Right ventricle myocardium inferior (tissue), 1 donor: ENCODE measurements at regions of chr12 and their contacts with region 1.

Region 1: GRCh38 chr12:57983146-57983857 is 41.9 kb downstream of the ATP23 start:
- DNase-seq: no peak
- ATAC-seq: no peak

Region 2: GRCh38 chr12:58176296-58176869 is 193.1 kb after region 1 on chr12:
- intact Hi-C with region 1: loop called (anchors 10 kb)
- DNase-seq: no peak
- ATAC-seq: no peak

Region 3: GRCh38 chr12:58302485-58303011 is 319.2 kb after region 1 on chr12:
- intact Hi-C with region 1: loop called (anchors 10 kb)
- DNase-seq: no peak
- ATAC-seq: no peak

Region 4: DNA sequence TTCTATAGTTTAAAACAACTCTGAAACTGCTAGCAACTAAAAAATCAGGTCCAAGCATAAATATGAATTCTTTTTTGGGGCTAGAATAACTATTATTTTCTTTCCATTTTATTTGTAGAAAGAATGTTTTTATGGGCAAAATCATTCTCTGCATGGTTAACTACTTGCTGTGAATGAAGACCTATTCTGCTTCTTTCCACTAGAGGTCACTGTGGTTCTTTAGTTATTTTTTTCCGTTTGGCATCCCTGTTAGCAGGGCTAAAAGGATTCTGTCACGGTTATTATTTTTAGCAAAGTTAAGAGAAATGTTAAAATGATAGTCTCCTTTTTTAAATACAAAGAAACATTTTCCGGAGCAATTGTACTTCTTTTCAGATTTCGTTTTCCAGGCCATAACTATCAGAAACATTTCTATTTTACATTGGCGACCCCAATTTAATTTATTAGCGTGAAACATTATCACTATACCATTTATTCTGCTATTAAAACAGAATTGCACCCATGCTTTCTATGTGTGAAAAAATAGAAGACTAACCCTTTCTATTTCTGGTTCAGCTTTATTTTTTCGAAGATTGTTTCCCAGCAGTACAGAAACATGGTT is 362.8 kb after region 1 on chr12:
- intact Hi-C with region 1: loop called (anchors 10 kb)
- DNase-seq: no peak
- ATAC-seq: no peak

Region 5: GRCh38 chr12:59149997-59150642 is 1166.8 kb after region 1 on chr12:
- intact Hi-C with region 1: loop called (anchors 5 kb)
- DNase-seq: no peak
- ATAC-seq: peak; percentile 92